ENCODE measurements at regions of chr20 and their contacts with region 1.

Region 1: DNA sequence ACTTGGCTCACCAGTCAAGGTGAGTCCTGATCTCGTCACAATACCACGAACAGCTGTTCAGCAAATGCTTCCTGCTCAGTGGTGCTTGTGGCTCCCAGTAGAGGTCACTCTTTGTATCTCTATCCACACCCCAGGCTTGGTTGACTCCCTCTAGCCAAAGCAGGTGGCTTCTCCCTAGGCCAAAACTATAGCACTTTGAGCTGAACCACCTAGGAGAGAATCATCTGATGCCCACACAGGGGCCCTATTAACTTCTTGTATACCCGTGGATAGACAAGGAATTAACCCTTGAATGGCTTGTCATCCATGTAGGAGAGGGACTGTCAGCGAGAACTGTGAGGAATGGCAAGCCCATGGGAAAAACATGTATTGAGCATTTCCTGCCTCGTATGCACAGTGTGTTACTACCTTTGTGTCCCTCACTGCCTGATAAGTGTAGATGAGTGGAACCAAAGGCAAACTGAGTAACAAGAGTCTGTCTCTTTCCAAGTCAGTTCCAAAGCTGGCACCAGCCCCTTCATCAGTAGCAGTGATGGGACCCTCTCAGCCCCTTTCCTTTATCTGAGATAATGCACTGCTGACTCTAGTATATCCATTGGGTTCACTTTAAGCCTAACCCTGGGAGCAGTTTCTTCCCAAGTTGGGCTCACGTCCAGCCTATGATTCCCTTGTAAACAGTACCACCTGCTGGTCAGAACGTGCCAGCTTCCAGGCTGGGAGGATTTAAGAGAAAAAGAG is 42.5 kb downstream of the EIF2S2 start:
- DNase-seq: peak; percentile 50 to 75 (median 54)
- H3K4me3 ChIP-seq: no peak overlapping the region
- H3K4me3 Mint-ChIP-seq: peak overlapping the region in 1 of 8 donors; percentile 20
- H3K27ac ChIP-seq: no peak overlapping the region
- H3K27ac Mint-ChIP-seq: peak overlapping the region; percentile 10 to 88 (median 73)
- H3K4me1 ChIP-seq: peaks cover 17% of the 10 kb centered on the region
- H3K4me1 Mint-ChIP-seq: peaks cover 26 to 44% (median 35%) of the 10 kb centered on the region in 4 donors
- H3K27me3 ChIP-seq: no peaks in the 10 kb centered on the region
- H3K27me3 Mint-ChIP-seq: no peaks in the 10 kb centered on the region

Region 2: DNA sequence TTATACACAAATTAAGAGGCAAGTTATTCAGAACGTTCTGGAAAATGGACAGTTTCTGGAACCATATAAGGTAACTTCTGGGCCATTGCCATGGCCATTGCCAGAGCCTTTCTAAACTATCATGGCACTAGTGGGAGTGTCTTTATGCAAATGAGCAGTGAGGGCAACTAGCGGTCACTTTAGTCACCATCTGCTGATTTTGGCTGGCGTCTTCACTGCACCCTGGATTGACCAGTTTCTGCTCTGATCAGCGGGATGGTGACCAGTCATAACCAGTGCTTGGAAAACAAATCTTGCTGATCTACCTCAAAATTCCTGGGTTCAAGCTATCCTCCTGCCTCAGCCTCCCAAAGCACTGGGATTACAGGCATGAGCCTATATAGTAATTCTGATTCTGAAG is 618.6 kb before region 1 on chr20:
- CTCF ChIA-PET with region 1: no interaction called
- POLR2A ChIA-PET with region 1: no interaction called
- intact Hi-C with region 1: loop called (anchors 2 kb)
- DNase-seq: no peak
- H3K4me3 ChIP-seq: no peak overlapping the region
- H3K4me3 Mint-ChIP-seq: no peak overlapping the region
- H3K27ac ChIP-seq: no peak overlapping the region
- H3K27ac Mint-ChIP-seq: no peak overlapping the region
- H3K4me1 ChIP-seq: no peaks in the 10 kb centered on the region
- H3K4me1 Mint-ChIP-seq: peaks cover 0 to 5% (median 2%) of the 10 kb centered on the region in 4 donors
- H3K27me3 ChIP-seq: no peaks in the 10 kb centered on the region
- H3K27me3 Mint-ChIP-seq: no peaks in the 10 kb centered on the region

Region 3: DNA sequence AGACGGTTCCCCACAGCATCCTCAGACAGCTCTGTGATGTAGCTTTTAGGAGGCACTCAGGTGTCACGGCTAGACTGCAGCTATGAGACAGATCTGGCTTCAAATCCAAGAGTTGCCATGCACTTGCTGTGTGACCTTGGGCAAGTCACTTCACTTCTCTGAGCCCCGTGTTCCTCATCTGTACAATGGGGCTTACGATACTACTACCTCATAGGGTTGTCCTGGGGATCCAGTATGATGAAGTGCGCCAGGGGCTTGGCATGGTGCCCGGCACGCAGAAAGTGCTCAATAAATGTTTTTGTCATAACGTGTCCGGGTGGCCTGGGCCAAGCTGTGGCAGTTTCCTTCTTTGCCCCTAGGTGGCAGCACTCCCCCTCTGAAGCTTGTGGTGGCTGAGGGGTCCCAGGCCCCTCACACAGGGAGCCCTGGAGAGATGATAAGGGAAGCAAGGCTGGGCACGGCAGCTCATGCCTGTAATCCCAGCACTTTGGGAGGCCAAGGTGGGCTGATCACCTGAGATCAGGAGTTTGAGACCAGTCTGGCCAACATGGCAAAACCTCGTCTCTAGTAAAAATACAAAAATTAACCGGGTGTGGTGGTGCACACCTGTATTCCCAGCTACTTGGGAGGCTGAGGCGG is 277.4 kb before region 1 on chr20:
- CTCF ChIA-PET with region 1: interaction called, 27 read pairs
- POLR2A ChIA-PET with region 1: no interaction called
- intact Hi-C with region 1: loop called (anchors 5 kb)
- DNase-seq: peak; percentile 20 to 48 (median 32)
- H3K4me3 ChIP-seq: no peak overlapping the region
- H3K4me3 Mint-ChIP-seq: no peak overlapping the region
- H3K27ac ChIP-seq: no peak overlapping the region
- H3K27ac Mint-ChIP-seq: no peak overlapping the region
- H3K4me1 ChIP-seq: peaks cover 9% of the 10 kb centered on the region
- H3K4me1 Mint-ChIP-seq: peaks cover 6 to 14% (median 10%) of the 10 kb centered on the region in 4 donors
- H3K27me3 ChIP-seq: no peaks in the 10 kb centered on the region
- H3K27me3 Mint-ChIP-seq: no peaks in the 10 kb centered on the region

Region 4: DNA sequence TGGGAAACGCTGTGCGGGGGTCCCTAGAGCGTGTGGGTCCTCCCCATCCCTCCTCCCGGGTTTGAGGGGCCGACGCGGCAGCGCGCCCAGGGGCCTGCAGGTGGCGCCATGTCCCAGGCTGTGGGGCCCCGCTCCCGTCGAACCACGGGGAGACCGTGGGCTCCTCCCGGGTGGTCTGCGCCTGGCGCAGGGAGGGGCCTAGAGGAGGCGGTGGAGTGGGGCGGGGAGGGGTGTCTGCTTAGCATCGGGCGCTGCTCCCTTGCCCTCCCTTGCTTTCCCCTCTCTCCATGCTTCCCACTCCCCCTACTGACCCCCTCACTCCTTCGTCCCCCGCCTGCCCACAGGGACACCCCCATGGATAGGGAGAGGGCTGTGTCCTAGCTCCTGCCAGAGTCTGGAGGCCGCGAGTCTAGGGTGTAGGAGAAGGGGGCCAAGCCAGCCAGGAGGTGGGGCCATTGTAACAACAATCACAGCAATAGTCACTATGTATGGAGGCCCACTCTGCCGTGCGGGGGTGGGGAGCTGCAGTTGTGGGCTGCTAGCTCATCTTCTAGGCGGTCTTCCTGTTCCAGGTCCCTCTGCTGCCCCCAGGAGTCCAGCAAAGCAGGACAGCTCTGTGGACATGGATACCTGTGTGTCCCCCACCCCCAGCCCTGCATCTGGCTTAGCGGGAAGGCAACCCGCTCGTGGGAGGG is 206.7 kb before region 1 on chr20:
- CTCF ChIA-PET with region 1: interaction called, 21 read pairs
- POLR2A ChIA-PET with region 1: no interaction called
- intact Hi-C with region 1: loop called (anchors 2 kb)
- DNase-seq: peak in 3 of 5 donors; percentile 24 to 39 (median 28)
- H3K4me3 ChIP-seq: no peak overlapping the region
- H3K4me3 Mint-ChIP-seq: peak overlapping the region in 1 of 8 donors; percentile 27
- H3K27ac ChIP-seq: no peak overlapping the region
- H3K27ac Mint-ChIP-seq: no peak overlapping the region
- H3K4me1 ChIP-seq: peaks cover 30% of the 10 kb centered on the region
- H3K4me1 Mint-ChIP-seq: peaks cover 15 to 26% (median 21%) of the 10 kb centered on the region in 4 donors
- H3K27me3 ChIP-seq: no peaks in the 10 kb centered on the region
- H3K27me3 Mint-ChIP-seq: no peaks in the 10 kb centered on the region

Region 5: DNA sequence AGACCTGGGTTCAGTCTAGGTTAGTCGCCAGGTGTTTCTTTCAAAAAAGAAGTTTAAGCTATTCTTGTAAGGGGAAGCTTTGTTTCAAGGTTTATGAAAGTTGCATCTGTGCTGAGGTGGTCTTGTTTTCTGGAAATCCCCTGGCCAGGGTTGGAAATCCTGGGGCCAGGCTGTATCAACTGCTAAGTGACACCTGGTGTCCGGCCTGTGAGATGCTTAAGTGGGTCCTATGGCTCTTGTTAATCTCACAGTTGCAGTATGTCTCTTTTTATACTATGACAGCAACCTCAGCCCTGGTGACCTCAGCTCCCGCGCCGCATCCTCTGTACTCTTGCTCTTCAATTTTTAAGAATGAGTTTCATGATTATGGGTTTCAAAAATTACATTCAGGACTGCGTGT is 186.3 kb before region 1 on chr20:
- CTCF ChIA-PET with region 1: no interaction called
- POLR2A ChIA-PET with region 1: no interaction called
- intact Hi-C with region 1: no loop called
- DNase-seq: no peak
- H3K4me3 ChIP-seq: no peak overlapping the region
- H3K4me3 Mint-ChIP-seq: no peak overlapping the region
- H3K27ac ChIP-seq: no peak overlapping the region
- H3K27ac Mint-ChIP-seq: no peak overlapping the region
- H3K4me1 ChIP-seq: peaks cover 5% of the 10 kb centered on the region
- H3K4me1 Mint-ChIP-seq: peaks cover 3 to 11% (median 8%) of the 10 kb centered on the region in 4 donors
- H3K27me3 ChIP-seq: no peaks in the 10 kb centered on the region
- H3K27me3 Mint-ChIP-seq: peaks cover 0 to 2% of the 10 kb centered on the region in 2 donors

Region 6: GRCh38 chr20:33933469-33933909 is 136.0 kb before region 1 on chr20:
- CTCF ChIA-PET with region 1: interaction called, 43 read pairs
- POLR2A ChIA-PET with region 1: no interaction called
- intact Hi-C with region 1: loop called (anchors 1 kb)
- DNase-seq: peak; percentile 50 to 63 (median 58)
- H3K4me3 ChIP-seq: no peak overlapping the region
- H3K4me3 Mint-ChIP-seq: no peak overlapping the region
- H3K27ac ChIP-seq: no peak overlapping the region
- H3K27ac Mint-ChIP-seq: peak overlapping the region in 2 of 7 donors; percentile 47 to 48
- H3K4me1 ChIP-seq: no peaks in the 10 kb centered on the region
- H3K4me1 Mint-ChIP-seq: peaks cover 0 to 2% (median 0%) of the 10 kb centered on the region in 4 donors
- H3K27me3 ChIP-seq: no peaks in the 10 kb centered on the region
- H3K27me3 Mint-ChIP-seq: no peaks in the 10 kb centered on the region

Region 7: DNA sequence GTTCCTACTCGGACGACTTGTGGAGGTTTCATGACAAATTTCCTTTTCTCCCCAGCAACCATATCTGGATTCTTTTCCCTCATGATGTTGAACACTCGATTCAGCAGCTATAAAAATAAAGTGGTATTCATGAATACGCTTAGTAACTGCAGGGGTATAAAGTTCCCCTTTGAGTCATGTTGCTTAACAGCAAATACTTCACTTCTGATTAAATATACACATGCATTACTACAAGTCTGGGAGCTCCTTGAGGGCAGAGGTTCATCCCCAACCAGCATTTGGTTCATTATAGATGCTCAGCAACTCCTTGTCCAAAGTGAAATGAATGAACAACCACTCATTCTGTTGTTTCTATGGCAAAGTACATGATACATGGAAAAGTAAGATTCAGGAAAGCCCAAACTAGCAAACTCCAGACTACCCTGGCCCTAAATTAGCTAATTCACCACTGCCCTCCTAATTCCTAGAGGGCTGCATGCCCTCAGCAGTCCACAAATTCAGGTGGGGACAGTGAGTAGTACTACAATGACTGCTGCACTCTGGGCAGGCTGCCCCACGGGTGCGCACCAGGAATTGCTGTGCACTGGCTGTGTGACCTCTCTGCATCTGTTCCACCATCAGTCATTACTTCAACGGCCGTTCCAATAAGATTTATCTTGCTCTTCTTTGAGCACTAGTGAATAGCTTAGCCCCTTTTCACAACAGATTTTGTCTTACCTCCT is 27.4 kb after region 1 on chr20:
- CTCF ChIA-PET with region 1: interaction called, 11 read pairs
- POLR2A ChIA-PET with region 1: no interaction called
- intact Hi-C with region 1: no loop called
- DNase-seq: no peak
- H3K4me3 ChIP-seq: no peak overlapping the region
- H3K4me3 Mint-ChIP-seq: no peak overlapping the region
- H3K27ac ChIP-seq: no peak overlapping the region
- H3K27ac Mint-ChIP-seq: peak overlapping the region in 5 of 7 donors; percentile 38 to 77 (median 46)
- H3K4me1 ChIP-seq: no peaks in the 10 kb centered on the region
- H3K4me1 Mint-ChIP-seq: peaks cover 4 to 14% (median 9%) of the 10 kb centered on the region in 4 donors
- H3K27me3 ChIP-seq: no peaks in the 10 kb centered on the region
- H3K27me3 Mint-ChIP-seq: no peaks in the 10 kb centered on the region

Region 8: GRCh38 chr20:34129518-34130162 is 60.1 kb after region 1 on chr20:
- CTCF ChIA-PET with region 1: interaction called, 9 read pairs
- POLR2A ChIA-PET with region 1: no interaction called
- intact Hi-C with region 1: loop called (anchors 1 kb)
- DNase-seq: peak; percentile 65 to 74 (median 71)
- H3K4me3 ChIP-seq: no peak overlapping the region
- H3K4me3 Mint-ChIP-seq: peak overlapping the region in 6 of 8 donors; percentile 3 to 77 (median 36)
- H3K27ac ChIP-seq: no peak overlapping the region
- H3K27ac Mint-ChIP-seq: no peak overlapping the region
- H3K4me1 ChIP-seq: peaks cover 4% of the 10 kb centered on the region
- H3K4me1 Mint-ChIP-seq: peaks cover 4 to 6% (median 4%) of the 10 kb centered on the region in 4 donors
- H3K27me3 ChIP-seq: no peaks in the 10 kb centered on the region
- H3K27me3 Mint-ChIP-seq: peaks cover 4 to 6% of the 10 kb centered on the region in 2 donors